ENCODE measurements at regions of chr1 and their contacts with region 1.

Region 1: GRCh38 chr1:8727809-8728213 is 89.6 kb downstream of the RERE start:
- H3K4me3 Mint-ChIP-seq: no peak overlapping the region
- H3K27ac Mint-ChIP-seq: no peak overlapping the region
- H3K4me1 Mint-ChIP-seq: peaks cover 4% of the 10 kb centered on the region
- H3K27me3 Mint-ChIP-seq: no peaks in the 10 kb centered on the region

Region 2: DNA sequence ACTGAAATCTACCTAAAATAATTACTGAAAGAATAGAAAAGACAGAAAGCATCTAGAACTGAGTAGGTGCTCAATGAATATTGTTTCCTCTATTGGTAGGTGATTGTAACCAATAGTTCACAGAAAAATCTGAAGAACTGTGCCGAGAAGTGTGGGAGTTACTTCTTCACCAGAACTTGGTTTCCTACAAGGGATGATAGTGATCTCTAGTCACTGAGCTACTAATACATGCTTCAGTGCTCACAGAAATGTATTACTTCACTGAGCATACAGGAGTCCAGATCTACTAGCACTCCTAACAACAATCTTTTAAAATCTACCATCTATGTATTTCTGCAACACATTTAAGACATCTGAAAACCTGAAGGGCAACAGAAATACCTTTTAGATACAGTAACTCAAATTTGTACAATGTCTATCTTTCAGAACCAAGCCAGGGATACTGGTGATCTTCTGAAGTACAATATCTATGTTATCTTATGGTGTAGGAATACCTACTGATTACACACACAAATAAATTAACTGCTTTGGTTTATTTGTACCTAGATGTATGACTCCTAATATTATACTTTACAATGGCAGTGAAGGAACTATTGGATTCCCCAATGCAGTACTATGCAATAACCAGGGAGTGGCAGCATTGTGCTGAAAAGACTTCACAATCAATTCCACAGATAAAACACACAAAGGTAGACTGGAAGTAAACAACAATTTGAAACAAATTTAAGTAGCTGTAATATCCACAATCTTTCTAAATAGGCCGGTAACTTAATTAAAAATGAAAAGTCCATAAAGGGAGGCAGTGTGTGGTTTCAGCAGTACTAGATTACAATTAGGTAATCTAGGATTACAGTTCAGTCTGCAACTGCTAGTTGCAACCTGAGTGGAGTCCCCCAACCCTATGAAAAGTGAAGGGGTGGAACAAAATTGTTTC is 166.9 kb before region 1 on chr1:
- intact Hi-C with region 1: loop called (anchors 1 kb)
- H3K4me3 Mint-ChIP-seq: no peak overlapping the region
- H3K27ac Mint-ChIP-seq: no peak overlapping the region
- H3K4me1 Mint-ChIP-seq: peaks cover 11% of the 10 kb centered on the region
- H3K27me3 Mint-ChIP-seq: no peaks in the 10 kb centered on the region

Region 3: GRCh38 chr1:8809342-8809736 is 81.5 kb after region 1 on chr1:
- intact Hi-C with region 1: no loop called
- H3K4me3 Mint-ChIP-seq: no peak overlapping the region
- H3K27ac Mint-ChIP-seq: no peak overlapping the region
- H3K4me1 Mint-ChIP-seq: no peaks in the 10 kb centered on the region
- H3K27me3 Mint-ChIP-seq: no peaks in the 10 kb centered on the region

Measured in dendritic cell treated with granulocyte-macrophage colony-stimulating factor and Interleukin-4, amounts not matched to agents 40 ng/mL and 50 ng/mL, for 4 days (primary cell).